Dorsolateral prefrontal cortex (tissue), 120 donors: ENCODE measurements at regions of chr12 and their contacts with region 1.

Region 1: DNA sequence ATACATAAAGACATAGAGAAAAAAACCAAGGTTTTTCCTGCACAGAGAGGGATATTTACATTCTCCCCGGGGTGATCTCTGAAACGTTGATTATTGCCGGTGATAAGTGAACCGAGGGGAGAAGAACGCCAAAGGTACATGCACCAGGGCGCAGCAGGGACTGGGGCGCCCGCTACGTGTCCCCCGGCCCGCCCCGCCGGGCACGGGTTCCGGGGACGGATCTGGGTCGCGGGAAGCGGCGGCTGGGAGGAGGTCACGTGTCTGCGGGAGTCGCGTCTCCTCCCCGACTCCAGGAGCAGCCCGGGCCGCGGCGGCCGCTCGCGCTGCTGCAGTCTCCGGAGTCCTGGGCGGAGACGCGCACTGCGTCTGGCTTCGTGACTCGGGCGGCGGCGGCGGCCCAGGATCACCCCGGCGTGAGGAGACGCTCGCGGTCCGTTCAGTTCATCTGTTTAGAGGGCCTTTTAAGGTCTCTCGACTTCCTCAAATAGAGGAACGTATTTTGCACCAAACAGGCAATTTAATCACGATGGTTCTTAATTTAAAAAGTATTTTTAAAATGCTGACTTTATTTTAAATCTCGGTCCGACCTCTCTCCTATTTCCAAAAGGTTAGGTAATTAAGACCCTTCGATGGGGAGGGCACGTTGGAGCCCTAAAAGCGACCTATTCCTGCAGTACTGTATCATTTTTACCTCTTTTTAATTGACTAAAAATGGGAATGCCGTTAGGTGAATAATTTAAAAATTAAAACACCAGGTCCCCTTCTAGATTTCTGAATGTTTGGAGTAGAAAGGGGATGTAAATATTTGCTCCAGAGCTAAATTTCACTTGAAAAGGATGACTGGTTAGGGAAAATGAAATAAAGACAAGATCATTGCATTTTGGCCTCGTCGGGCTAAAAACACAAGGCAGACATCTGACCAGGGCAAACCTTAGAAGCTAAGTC is 1.8 kb upstream of the BHLHE41 start:
- DNase-seq: peak; percentile 75 to 92 (median 86)
- H3K4me3 ChIP-seq: peak overlapping the region; percentile 47 to 93 (median 80)
- H3K27ac ChIP-seq: peak overlapping the region; percentile 84 to 100 (median 99)
- H3K27me3 ChIP-seq: no peaks in the 10 kb centered on the region
- CTCF ChIP-seq: peak in 28 of 56 donors; percentile 5 to 43 (median 21)

Region 2: GRCh38 chr12:26113853-26114719 is 12.5 kb before region 1 on chr12:
- intact Hi-C with region 1: no loop called
- DNase-seq: peak; percentile 80 to 92 (median 90)
- H3K4me3 ChIP-seq: peak overlapping the region; percentile 54 to 81 (median 70)
- H3K27ac ChIP-seq: peak overlapping the region; percentile 92 to 100 (median 98)
- H3K27me3 ChIP-seq: no peaks in the 10 kb centered on the region
- CTCF ChIP-seq: peak in 23 of 56 donors; percentile 4 to 48 (median 17)

Region 3: DNA sequence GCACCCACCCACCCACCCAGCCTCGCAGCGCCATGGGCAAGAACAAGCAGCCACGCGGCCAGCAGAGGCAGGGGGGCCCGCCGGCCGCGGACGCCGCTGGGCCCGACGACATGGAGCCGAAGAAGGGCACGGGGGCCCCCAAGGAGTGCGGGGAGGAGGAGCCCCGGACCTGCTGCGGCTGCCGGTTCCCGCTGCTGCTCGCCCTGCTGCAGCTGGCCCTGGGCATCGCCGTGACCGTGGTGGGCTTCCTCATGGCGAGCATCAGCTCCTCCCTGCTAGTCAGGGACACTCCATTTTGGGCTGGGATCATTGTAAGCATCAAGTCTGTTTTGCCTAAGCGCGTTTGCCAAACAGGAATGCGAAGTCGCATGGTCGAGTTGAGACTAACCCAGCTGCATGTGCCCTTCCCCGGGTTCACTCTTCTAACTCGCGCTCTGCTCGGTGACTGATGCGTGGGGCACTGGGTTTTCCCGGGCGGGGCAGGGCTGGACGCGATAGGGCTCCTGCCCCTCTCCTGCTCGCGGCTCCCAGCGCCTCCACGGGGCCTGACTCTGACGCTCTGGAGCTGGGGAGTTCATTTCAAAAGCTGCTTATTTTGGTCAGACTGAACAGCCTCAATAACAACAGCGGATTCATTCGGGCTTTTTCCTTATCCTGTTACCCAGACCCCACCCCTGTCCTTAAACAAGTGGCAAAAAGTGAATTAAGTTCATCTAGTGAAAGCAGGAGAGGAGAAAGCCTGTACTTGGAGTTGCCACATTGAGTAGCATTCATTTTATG is 69.2 kb after region 1 on chr12:
- intact Hi-C with region 1: loop called (anchors 1 to 2 kb)
- DNase-seq: peak; percentile 55 to 81 (median 66)
- H3K4me3 ChIP-seq: peak overlapping the region; percentile 41 to 89 (median 76)
- H3K27ac ChIP-seq: peak overlapping the region; percentile 78 to 99 (median 96)
- H3K27me3 ChIP-seq: no peaks in the 10 kb centered on the region
- CTCF ChIP-seq: peak in 2 of 56 donors; percentile 12 to 20

Region 4: DNA sequence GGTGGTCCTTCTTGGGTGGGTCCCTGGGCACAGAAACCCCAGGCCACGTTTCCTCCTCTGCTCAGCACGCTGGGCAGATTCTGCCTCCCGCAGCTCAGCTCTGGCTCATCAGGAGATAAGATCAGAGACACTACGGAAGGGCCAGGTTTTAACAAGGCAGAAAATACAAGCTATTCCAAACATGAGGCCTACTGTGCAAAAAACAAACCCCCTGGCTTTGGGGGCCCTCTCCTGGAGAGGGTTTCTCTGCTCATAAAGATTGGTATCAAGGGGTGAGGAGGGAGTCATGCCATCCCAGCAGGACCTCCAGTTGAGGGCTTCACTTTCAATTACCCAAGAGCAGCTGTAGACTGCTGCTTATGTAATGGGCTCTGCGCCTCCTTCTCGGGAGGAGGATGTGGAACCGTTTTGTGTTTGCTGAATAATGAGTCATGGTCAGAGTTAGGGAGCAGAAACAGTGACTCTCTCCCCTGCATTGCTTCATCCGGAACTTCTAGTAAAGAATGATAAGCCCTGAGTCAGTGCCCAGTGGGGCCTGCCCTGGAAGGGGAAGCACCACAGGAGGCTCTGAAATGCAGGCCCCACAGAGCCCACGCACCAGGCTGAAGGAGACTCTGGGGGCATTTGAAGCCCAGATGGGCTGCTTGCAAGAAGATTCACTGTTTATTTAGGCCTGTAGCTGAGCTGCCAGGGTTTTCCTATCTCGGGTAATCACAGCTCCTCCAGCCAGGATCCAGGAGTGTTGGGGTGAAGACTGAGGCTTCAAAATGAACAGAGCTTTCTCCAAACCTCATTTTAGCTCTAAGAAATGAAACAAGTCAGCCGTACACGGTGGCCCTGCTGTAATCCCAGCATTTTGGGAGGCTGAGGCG is 148.1 kb after region 1 on chr12:
- intact Hi-C with region 1: loop called in 1 of 2 experiments (anchors 5 kb)
- DNase-seq: peak in 8 of 10 donors; percentile 47 to 79 (median 65)
- H3K4me3 ChIP-seq: peak overlapping the region in 2 of 59 donors; percentile 3 to 16
- H3K27ac ChIP-seq: peak overlapping the region; percentile 26 to 94 (median 86)
- H3K27me3 ChIP-seq: no peaks in the 10 kb centered on the region
- CTCF ChIP-seq: peak in 31 of 56 donors; percentile 7 to 48 (median 26)

Region 5: GRCh38 chr12:26369588-26369987 is 243.0 kb after region 1 on chr12:
- intact Hi-C with region 1: loop called in 1 of 2 experiments (anchors 2 kb)
- DNase-seq: no peak
- H3K4me3 ChIP-seq: peak overlapping the region in 1 of 59 donors; percentile 9
- H3K27ac ChIP-seq: peak overlapping the region in 37 of 59 donors; percentile 3 to 72 (median 42)
- H3K27me3 ChIP-seq: no peaks in the 10 kb centered on the region
- CTCF ChIP-seq: no peak

Region 6: DNA sequence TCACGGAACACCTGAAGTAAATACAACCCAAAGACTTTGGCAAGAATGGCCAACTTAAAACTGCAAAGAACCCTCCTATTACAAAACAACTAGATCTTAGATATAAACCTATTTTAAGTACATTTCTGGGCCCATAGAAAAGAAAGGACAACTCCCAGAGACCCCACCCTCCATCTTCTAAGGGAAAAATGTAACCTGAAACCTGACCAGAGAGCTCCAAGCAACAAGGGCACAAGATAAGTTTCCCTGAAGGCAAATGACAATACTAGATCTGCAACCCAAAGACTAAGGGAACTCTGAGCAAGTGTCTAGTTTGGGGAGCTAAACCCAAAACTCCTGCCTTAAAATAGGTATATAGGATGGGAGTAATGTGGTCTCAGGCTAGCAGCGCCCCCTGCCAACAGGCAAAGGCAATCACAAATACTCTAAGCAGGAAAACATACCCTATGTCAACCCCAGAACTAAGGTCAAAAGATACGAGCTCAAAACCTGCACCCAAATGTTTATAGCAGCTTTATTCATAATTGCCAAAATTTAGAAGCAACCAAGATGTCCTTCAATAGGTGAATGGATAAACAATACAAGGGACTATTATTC is 487.5 kb after region 1 on chr12:
- intact Hi-C with region 1: loop called (anchors 2 to 5 kb)
- DNase-seq: peak in 4 of 10 donors; percentile 45 to 55 (median 46)
- H3K4me3 ChIP-seq: no peak overlapping the region
- H3K27ac ChIP-seq: peak overlapping the region in 53 of 59 donors; percentile 41 to 100 (median 96)
- H3K27me3 ChIP-seq: no peaks in the 10 kb centered on the region
- CTCF ChIP-seq: peak in 53 of 56 donors; percentile 33 to 71 (median 55)

Region 7: GRCh38 chr12:26918309-26919215 is 792.0 kb after region 1 on chr12:
- intact Hi-C with region 1: no loop called
- DNase-seq: no peak
- H3K4me3 ChIP-seq: peak overlapping the region in 29 of 59 donors; percentile 2 to 44 (median 21)
- H3K27ac ChIP-seq: peak overlapping the region in 58 of 59 donors; percentile 1 to 92 (median 72)
- H3K27me3 ChIP-seq: no peaks in the 10 kb centered on the region
- CTCF ChIP-seq: peak in 37 of 56 donors; percentile 10 to 58 (median 31)